Activated naive CD8-positive, alpha-beta T cell treated with anti-CD3 and anti-CD28 coated beads, Interleukin-2, amount 10 ng/mL, durations not matched to agents 7 days and 5 days (primary cell): ENCODE measurements at regions of chr11 and their contacts with region 1.

Region 1: GRCh38 chr11:1917671-1918516 is 1.6 kb upstream of the TNNT3 start:
- DNase-seq: peak; percentile 37
- ATAC-seq: peak; percentile 15
- H3K4me3 Mint-ChIP-seq: no peak overlapping the region
- H3K27ac Mint-ChIP-seq: no peak overlapping the region
- H3K4me1 Mint-ChIP-seq: peaks cover 9% of the 10 kb centered on the region
- H3K27me3 Mint-ChIP-seq: peaks cover 2% of the 10 kb centered on the region

Region 2: GRCh38 chr11:1889224-1890120 is 28.4 kb before region 1 on chr11:
- POLR2A ChIA-PET with region 1: interaction called, 31 read pairs
- DNase-seq: peak; percentile 85
- ATAC-seq: peak; percentile 85
- H3K4me3 Mint-ChIP-seq: peak overlapping the region; percentile 76
- H3K27ac Mint-ChIP-seq: peak overlapping the region; percentile 90
- H3K4me1 Mint-ChIP-seq: peaks cover 34% of the 10 kb centered on the region
- H3K27me3 Mint-ChIP-seq: no peaks in the 10 kb centered on the region

Region 3: GRCh38 chr11:1906701-1907423 is 11.0 kb before region 1 on chr11:
- POLR2A ChIA-PET with region 1: no interaction called
- DNase-seq: no peak
- ATAC-seq: no peak
- H3K4me3 Mint-ChIP-seq: no peak overlapping the region
- H3K27ac Mint-ChIP-seq: no peak overlapping the region
- H3K4me1 Mint-ChIP-seq: no peaks in the 10 kb centered on the region
- H3K27me3 Mint-ChIP-seq: peaks cover 17% of the 10 kb centered on the region